CD4-positive, alpha-beta T cell (primary cell): ENCODE measurements at regions of chr14 and their contacts with region 1.

Region 1: GRCh38 chr14:68685419-68686204 is 107.3 kb downstream of the ZFP36L1 start:
- DNase-seq: peak; percentile 62 to 96 (median 80)
- ATAC-seq: peak; percentile 84
- H3K4me3 ChIP-seq: no peak overlapping the region
- H3K4me3 Mint-ChIP-seq: peak overlapping the region; percentile 3
- H3K27ac ChIP-seq: peak overlapping the region; percentile 62 to 87
- H3K27ac Mint-ChIP-seq: peak overlapping the region; percentile 94
- H3K4me1 ChIP-seq: peaks cover 59% of the 10 kb centered on the region
- H3K4me1 Mint-ChIP-seq: peaks cover 70% of the 10 kb centered on the region
- H3K27me3 ChIP-seq: no peaks in the 10 kb centered on the region
- H3K27me3 Mint-ChIP-seq: no peaks in the 10 kb centered on the region
- CTCF ChIP-seq: no peak

Region 2: DNA sequence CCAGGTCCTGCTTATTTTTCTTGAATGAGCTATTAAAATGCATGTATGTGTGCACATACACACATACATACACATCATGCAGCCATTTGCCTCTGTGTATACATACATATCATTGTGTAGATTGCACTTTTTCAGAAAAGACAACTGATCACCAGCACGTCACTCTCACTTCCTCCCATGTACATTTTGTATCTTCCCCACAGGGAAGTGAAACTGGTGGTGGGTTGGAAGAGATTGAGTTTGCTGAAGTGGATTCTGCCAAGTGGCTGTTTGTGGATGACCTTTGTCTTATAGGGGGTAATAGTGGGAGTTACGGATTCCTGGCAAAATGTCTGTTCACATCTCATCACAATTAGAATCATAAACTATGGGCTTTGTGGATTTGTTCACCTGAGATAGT is 417.4 kb before region 1 on chr14:
- CTCF ChIA-PET with region 1: no interaction called
- POLR2A ChIA-PET with region 1: no interaction called
- intact Hi-C with region 1: loop called in 1 of 2 experiments (anchors 10 kb)
- DNase-seq: peak in 3 of 14 experiments; percentile 63 to 69 (median 66)
- ATAC-seq: peak; percentile 64
- H3K4me3 ChIP-seq: no peak overlapping the region
- H3K4me3 Mint-ChIP-seq: peak overlapping the region; percentile 13
- H3K27ac ChIP-seq: peak overlapping the region in 1 of 2 donors; percentile 45
- H3K27ac Mint-ChIP-seq: peak overlapping the region; percentile 77
- H3K4me1 ChIP-seq: peaks cover 22% of the 10 kb centered on the region
- H3K4me1 Mint-ChIP-seq: peaks cover 64% of the 10 kb centered on the region
- H3K27me3 ChIP-seq: no peaks in the 10 kb centered on the region
- H3K27me3 Mint-ChIP-seq: no peaks in the 10 kb centered on the region
- CTCF ChIP-seq: no peak

Region 3: GRCh38 chr14:68292441-68293215 is 393.0 kb before region 1 on chr14:
- CTCF ChIA-PET with region 1: no interaction called
- POLR2A ChIA-PET with region 1: interaction called, 3 read pairs
- intact Hi-C with region 1: loop called in 1 of 2 experiments (anchors 5 kb)
- DNase-seq: no peak
- ATAC-seq: no peak
- H3K4me3 ChIP-seq: no peak overlapping the region
- H3K4me3 Mint-ChIP-seq: peak overlapping the region; percentile 42
- H3K27ac ChIP-seq: peak overlapping the region; percentile 52 to 63
- H3K27ac Mint-ChIP-seq: peak overlapping the region; percentile 83
- H3K4me1 ChIP-seq: peaks cover 29% of the 10 kb centered on the region
- H3K4me1 Mint-ChIP-seq: peaks cover 62% of the 10 kb centered on the region
- H3K27me3 ChIP-seq: no peaks in the 10 kb centered on the region
- H3K27me3 Mint-ChIP-seq: no peaks in the 10 kb centered on the region
- CTCF ChIP-seq: no peak

Region 4: DNA sequence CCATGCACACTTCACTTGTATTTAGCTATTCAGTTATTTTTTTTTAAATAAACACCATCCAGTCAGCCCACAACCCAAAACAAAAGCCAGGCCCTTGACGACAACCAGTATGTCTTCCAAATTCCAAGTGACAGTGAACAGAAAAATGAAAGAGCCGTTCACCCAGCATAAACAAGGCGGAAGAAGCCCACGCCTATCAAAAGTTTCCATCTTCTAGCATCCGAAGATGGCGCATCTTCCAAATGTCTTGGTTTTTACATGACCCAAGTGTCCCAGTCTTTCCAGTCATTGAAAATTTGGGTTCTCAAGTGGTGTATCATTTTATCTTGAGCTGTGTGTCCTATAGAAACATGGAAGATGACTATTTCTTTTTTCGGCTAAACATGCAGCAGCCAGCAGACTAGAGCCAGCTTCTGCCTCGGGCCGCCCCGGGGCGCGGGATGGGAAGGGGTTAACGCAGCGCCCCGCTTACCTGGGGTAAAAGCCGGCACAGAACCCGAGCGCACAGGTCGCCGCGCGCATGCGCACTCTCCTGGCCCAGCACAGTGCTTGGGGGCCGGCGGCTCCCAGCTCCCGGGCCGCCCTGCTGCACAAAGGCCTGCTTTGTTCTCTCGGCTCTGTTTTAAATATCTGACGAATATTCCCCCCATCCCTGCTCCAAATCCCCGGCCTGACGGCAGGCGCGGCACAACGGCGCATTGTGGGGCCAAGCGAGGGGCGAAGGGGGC is 57.6 kb before region 1 on chr14:
- CTCF ChIA-PET with region 1: no interaction called
- POLR2A ChIA-PET with region 1: interaction called, 6 read pairs
- intact Hi-C with region 1: loop called in 1 of 2 experiments (anchors 10 kb)
- DNase-seq: peak; percentile 24 to 83 (median 58)
- ATAC-seq: peak; percentile 64
- H3K4me3 ChIP-seq: peak overlapping the region; percentile 60
- H3K4me3 Mint-ChIP-seq: peak overlapping the region; percentile 90
- H3K27ac ChIP-seq: peak overlapping the region in 1 of 2 donors; percentile 62
- H3K27ac Mint-ChIP-seq: peak overlapping the region; percentile 89
- H3K4me1 ChIP-seq: peaks cover 15% of the 10 kb centered on the region
- H3K4me1 Mint-ChIP-seq: peaks cover 31% of the 10 kb centered on the region
- H3K27me3 ChIP-seq: no peaks in the 10 kb centered on the region
- H3K27me3 Mint-ChIP-seq: no peaks in the 10 kb centered on the region
- CTCF ChIP-seq: no peak

Region 5: GRCh38 chr14:68780358-68781160 is 94.9 kb after region 1 on chr14:
- CTCF ChIA-PET with region 1: interaction called, 7 read pairs
- POLR2A ChIA-PET with region 1: interaction called, 41 read pairs
- intact Hi-C with region 1: loop called (anchors 1 to 5 kb)
- DNase-seq: peak in 9 of 14 experiments; percentile 27 to 77 (median 44)
- ATAC-seq: peak; percentile 36
- H3K4me3 ChIP-seq: peak overlapping the region; percentile 44
- H3K4me3 Mint-ChIP-seq: peak overlapping the region; percentile 79
- H3K27ac ChIP-seq: peak overlapping the region; percentile 56 to 58
- H3K27ac Mint-ChIP-seq: peak overlapping the region; percentile 92
- H3K4me1 ChIP-seq: peaks cover 81% of the 10 kb centered on the region
- H3K4me1 Mint-ChIP-seq: peaks cover 79% of the 10 kb centered on the region
- H3K27me3 ChIP-seq: no peaks in the 10 kb centered on the region
- H3K27me3 Mint-ChIP-seq: no peaks in the 10 kb centered on the region
- CTCF ChIP-seq: no peak

Region 6: DNA sequence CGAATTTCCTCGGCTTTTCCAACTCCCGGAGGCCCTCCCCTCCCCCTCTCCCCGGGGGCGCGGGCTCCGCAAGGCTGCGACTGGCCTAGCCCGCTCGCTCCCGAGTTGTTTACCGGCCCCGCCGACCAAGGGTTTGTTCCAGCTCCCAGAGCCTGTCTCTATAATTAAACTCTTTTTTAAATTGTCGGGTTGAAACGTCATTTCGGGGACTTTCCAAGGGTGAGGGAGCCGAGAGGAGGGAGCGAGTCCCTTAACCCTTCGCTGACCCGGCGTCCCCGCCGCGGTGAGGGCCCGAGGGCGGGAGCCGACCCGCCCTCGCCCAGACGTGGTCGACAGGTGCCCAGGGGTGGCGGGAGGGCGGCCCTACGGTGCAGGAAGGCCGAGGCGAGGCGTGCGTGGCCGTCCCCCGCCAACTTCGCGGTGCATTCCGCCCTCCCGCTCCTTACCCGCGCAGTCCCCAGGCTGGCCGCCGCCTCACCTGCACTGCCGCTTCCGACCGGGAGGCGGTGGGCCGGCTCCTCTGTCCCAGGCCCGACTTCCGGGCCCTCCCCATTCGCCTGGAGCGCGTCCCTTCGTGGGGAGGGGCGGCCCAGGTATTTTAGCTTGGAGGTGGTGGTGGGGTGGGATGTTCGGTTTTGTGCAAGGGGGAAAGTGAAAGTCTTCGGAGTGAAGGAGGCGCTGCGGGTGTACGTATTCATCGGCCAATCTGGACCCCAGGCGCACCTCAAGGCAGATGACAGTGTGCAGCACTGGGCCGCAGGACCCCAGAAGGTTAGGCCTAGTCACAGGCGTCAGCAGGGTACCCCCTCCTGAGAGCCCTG is 110.2 kb after region 1 on chr14:
- CTCF ChIA-PET with region 1: interaction called, 12 read pairs
- POLR2A ChIA-PET with region 1: interaction called, 23 read pairs
- intact Hi-C with region 1: no loop called
- DNase-seq: peak; percentile 66 to 95 (median 80)
- ATAC-seq: peak; percentile 43
- H3K4me3 ChIP-seq: peak overlapping the region; percentile 98
- H3K4me3 Mint-ChIP-seq: peak overlapping the region; percentile 92
- H3K27ac ChIP-seq: peak overlapping the region; percentile 100
- H3K27ac Mint-ChIP-seq: peak overlapping the region; percentile 99
- H3K4me1 ChIP-seq: peaks cover 29% of the 10 kb centered on the region
- H3K4me1 Mint-ChIP-seq: peaks cover 49% of the 10 kb centered on the region
- H3K27me3 ChIP-seq: no peaks in the 10 kb centered on the region
- H3K27me3 Mint-ChIP-seq: no peaks in the 10 kb centered on the region
- CTCF ChIP-seq: peak; percentile 77

Region 7: GRCh38 chr14:69129264-69129880 is 443.8 kb after region 1 on chr14:
- CTCF ChIA-PET with region 1: no interaction called
- POLR2A ChIA-PET with region 1: no interaction called
- intact Hi-C with region 1: no loop called
- DNase-seq: peak; percentile 53 to 90 (median 66)
- ATAC-seq: peak; percentile 92
- H3K4me3 ChIP-seq: no peak overlapping the region
- H3K4me3 Mint-ChIP-seq: peak overlapping the region; percentile 22
- H3K27ac ChIP-seq: no peak overlapping the region
- H3K27ac Mint-ChIP-seq: peak overlapping the region; percentile 61
- H3K4me1 ChIP-seq: peaks cover 17% of the 10 kb centered on the region
- H3K4me1 Mint-ChIP-seq: peaks cover 86% of the 10 kb centered on the region
- H3K27me3 ChIP-seq: no peaks in the 10 kb centered on the region
- H3K27me3 Mint-ChIP-seq: no peaks in the 10 kb centered on the region
- CTCF ChIP-seq: peak; percentile 93

Region 8: GRCh38 chr14:70073924-70074566 is 1388.4 kb after region 1 on chr14:
- CTCF ChIA-PET with region 1: no interaction called
- POLR2A ChIA-PET with region 1: no interaction called
- intact Hi-C with region 1: no loop called
- DNase-seq: peak in 8 of 14 experiments; percentile 5 to 54 (median 18)
- ATAC-seq: no peak
- H3K4me3 ChIP-seq: no peak overlapping the region
- H3K4me3 Mint-ChIP-seq: no peak overlapping the region
- H3K27ac ChIP-seq: no peak overlapping the region
- H3K27ac Mint-ChIP-seq: no peak overlapping the region
- H3K4me1 ChIP-seq: no peaks in the 10 kb centered on the region
- H3K4me1 Mint-ChIP-seq: no peaks in the 10 kb centered on the region
- H3K27me3 ChIP-seq: peaks cover 0 to 6% of the 10 kb centered on the region in 2 experiments
- H3K27me3 Mint-ChIP-seq: peaks cover 34% of the 10 kb centered on the region
- CTCF ChIP-seq: peak; percentile 44